ENCODE measurements at regions of chr2 and their contacts with region 1.

Region 1: GRCh38 chr2:148509288-148509902 is 135.2 kb upstream of the EPC2 start:
- DNase-seq: peak; percentile 84
- ATAC-seq: peak; percentile 100
- H3K4me3 ChIP-seq: peak overlapping the region in 4 of 5 experiments; percentile 28 to 58 (median 52)
- H3K4me3 Mint-ChIP-seq: peak overlapping the region; percentile 65
- H3K27ac ChIP-seq: no peak overlapping the region
- H3K27ac Mint-ChIP-seq: peak overlapping the region; percentile 21
- H3K4me1 ChIP-seq: peaks cover 4 to 9% of the 10 kb centered on the region in 2 donors
- H3K4me1 Mint-ChIP-seq: peaks cover 9% of the 10 kb centered on the region
- H3K27me3 ChIP-seq: no peaks in the 10 kb centered on the region
- H3K27me3 Mint-ChIP-seq: no peaks in the 10 kb centered on the region
- CTCF ChIP-seq: peak; percentile 86

Region 2: DNA sequence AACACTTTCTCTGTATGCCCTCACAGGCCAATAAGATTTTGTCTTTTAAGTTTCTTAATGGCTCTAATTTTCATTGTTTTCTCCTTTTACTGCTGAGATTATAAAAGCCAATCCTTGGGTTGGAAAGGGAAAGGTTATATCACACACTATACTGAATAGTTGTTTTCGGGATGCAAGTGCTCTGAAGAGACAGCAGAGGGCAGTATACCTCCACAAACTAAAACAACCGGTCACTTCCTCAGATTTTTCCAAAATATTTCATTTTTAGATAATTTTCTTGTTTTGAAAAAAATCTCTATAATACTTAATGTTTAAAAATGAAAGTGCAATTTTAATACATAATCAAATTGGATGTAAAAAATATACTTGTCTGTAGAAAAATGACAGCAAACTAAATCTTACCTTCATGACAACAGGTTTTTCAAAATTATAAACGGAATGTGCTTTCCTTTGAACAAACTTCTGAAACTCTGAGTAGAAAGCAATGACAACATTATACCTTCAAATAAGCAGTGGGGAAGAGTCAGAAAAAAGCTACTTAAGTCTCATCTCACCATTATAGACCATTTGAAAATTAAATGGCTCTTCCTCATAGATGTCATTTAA is 571.5 kb before region 1 on chr2:
- CTCF ChIA-PET with region 1: interaction called, 70 read pairs
- POLR2A ChIA-PET with region 1: no interaction called
- intact Hi-C with region 1: loop called (anchors 1 kb)
- DNase-seq: peak; percentile 49
- ATAC-seq: no peak
- H3K4me3 ChIP-seq: no peak overlapping the region
- H3K4me3 Mint-ChIP-seq: no peak overlapping the region
- H3K27ac ChIP-seq: no peak overlapping the region
- H3K27ac Mint-ChIP-seq: no peak overlapping the region
- H3K4me1 ChIP-seq: no peaks in the 10 kb centered on the region
- H3K4me1 Mint-ChIP-seq: no peaks in the 10 kb centered on the region
- H3K27me3 ChIP-seq: no peaks in the 10 kb centered on the region
- H3K27me3 Mint-ChIP-seq: no peaks in the 10 kb centered on the region
- CTCF ChIP-seq: peak; percentile 98

Region 3: GRCh38 chr2:147989809-147990403 is 519.5 kb before region 1 on chr2:
- CTCF ChIA-PET with region 1: interaction called, 143 read pairs
- POLR2A ChIA-PET with region 1: interaction called, 3 read pairs
- intact Hi-C with region 1: loop called (anchors 1 kb)
- DNase-seq: peak; percentile 67
- ATAC-seq: peak; percentile 68
- H3K4me3 ChIP-seq: no peak overlapping the region
- H3K4me3 Mint-ChIP-seq: no peak overlapping the region
- H3K27ac ChIP-seq: no peak overlapping the region
- H3K27ac Mint-ChIP-seq: no peak overlapping the region
- H3K4me1 ChIP-seq: no peaks in the 10 kb centered on the region
- H3K4me1 Mint-ChIP-seq: peaks cover 27% of the 10 kb centered on the region
- H3K27me3 ChIP-seq: no peaks in the 10 kb centered on the region
- H3K27me3 Mint-ChIP-seq: no peaks in the 10 kb centered on the region
- CTCF ChIP-seq: peak; percentile 96

Region 4: DNA sequence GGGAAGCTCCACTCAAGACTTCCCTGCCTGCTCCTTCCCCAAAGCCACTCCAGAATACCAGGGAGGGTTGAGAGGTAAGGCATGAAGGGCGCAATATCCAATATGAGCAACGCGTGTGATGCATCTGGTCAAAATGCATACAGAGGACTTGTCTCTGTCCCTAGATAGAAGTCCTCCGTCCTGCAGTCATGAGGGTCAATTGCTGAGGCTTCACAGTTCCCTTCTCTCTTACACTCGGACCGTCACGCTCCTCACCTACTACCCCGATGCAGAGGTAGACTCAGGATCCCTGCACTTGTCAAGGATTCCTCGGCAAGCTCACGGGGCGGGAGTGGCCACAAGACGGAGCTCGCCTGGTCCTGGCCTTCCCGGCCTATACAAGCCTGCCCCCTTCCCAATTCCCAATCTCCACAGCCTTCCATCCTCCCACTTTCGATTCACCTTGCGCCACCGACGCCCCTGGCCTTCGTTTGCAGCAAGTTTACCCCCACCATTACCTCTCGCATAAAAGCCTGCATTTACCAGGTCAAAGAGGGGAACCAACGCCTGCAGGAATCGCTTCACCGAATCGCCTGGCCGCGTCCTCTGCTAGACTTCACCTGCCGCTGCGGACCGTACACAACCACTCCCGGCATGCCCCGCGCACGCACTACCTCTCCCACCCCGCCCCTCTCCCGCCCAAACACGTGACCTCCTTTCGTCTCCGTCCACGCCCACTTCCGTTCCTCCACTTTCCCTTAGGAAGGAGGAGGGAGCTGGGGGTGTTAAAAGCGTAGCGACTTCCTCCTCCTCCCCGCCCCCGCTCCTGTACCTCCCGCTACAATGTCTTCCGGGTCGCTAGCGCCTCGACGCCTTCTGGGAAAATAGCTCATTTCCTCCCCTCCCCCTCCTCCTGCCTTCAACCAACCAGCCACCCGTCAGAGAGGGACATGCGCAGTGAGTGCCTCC is 489.0 kb before region 1 on chr2 and contains the start of gene ORC4:
- CTCF ChIA-PET with region 1: interaction called, 12 read pairs
- POLR2A ChIA-PET with region 1: no interaction called
- intact Hi-C with region 1: no loop called
- DNase-seq: peak; percentile 99
- ATAC-seq: peak; percentile 89
- H3K4me3 ChIP-seq: peak within 1 kb of the TSS; percentile 79 to 95 (median 80)
- H3K4me3 Mint-ChIP-seq: peak within 1 kb of the TSS; percentile 99
- H3K27ac ChIP-seq: peak within 1 kb of the TSS; percentile 91 to 92
- H3K27ac Mint-ChIP-seq: peak within 1 kb of the TSS; percentile 94
- H3K4me1 ChIP-seq: peaks cover 23 to 37% of the 10 kb centered on the region in 2 donors
- H3K4me1 Mint-ChIP-seq: peaks cover 52% of the 10 kb centered on the region
- H3K27me3 ChIP-seq: no peaks in the 10 kb centered on the region
- H3K27me3 Mint-ChIP-seq: no peaks in the 10 kb centered on the region
- CTCF ChIP-seq: no peak
- total RNA-seq, gene ORC4: 44.3 and 48.9 TPM in 2 replicates

Region 5: DNA sequence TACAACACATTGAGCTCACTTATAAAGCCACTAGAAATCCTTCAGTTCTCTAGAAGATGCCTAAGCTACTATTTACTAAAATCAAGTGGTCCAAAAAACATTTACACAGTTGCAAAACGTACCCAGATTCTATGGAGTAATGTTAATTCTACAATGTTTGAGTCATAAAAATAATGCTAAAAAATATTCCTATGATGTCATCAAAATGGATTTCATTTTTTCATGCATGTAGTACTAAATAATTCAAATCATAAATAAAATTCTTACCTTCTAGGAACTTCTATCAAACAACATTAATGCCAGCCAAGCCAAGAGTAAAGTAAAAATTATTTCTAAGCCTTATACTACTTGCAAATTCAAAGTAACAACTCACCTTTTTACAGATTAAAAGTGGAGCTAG is 33.8 kb before region 1 on chr2:
- CTCF ChIA-PET with region 1: no interaction called
- POLR2A ChIA-PET with region 1: no interaction called
- intact Hi-C with region 1: no loop called
- DNase-seq: no peak
- ATAC-seq: no peak
- H3K4me3 ChIP-seq: no peak overlapping the region
- H3K4me3 Mint-ChIP-seq: no peak overlapping the region
- H3K27ac ChIP-seq: no peak overlapping the region
- H3K27ac Mint-ChIP-seq: no peak overlapping the region
- H3K4me1 ChIP-seq: no peaks in the 10 kb centered on the region
- H3K4me1 Mint-ChIP-seq: no peaks in the 10 kb centered on the region
- H3K27me3 ChIP-seq: no peaks in the 10 kb centered on the region
- H3K27me3 Mint-ChIP-seq: no peaks in the 10 kb centered on the region
- CTCF ChIP-seq: no peak

Region 6: GRCh38 chr2:148493822-148494563 is 15.4 kb before region 1 on chr2:
- CTCF ChIA-PET with region 1: interaction called, 20 read pairs
- POLR2A ChIA-PET with region 1: interaction called, 3 read pairs
- intact Hi-C with region 1: no loop called
- DNase-seq: peak; percentile 33
- ATAC-seq: no peak
- H3K4me3 ChIP-seq: peak overlapping the region in 2 of 5 experiments; percentile 18 to 27
- H3K4me3 Mint-ChIP-seq: peak overlapping the region; percentile 80
- H3K27ac ChIP-seq: peak overlapping the region; percentile 64 to 69
- H3K27ac Mint-ChIP-seq: peak overlapping the region; percentile 89
- H3K4me1 ChIP-seq: peaks cover 29 to 40% of the 10 kb centered on the region in 2 donors
- H3K4me1 Mint-ChIP-seq: peaks cover 40% of the 10 kb centered on the region
- H3K27me3 ChIP-seq: no peaks in the 10 kb centered on the region
- H3K27me3 Mint-ChIP-seq: no peaks in the 10 kb centered on the region
- CTCF ChIP-seq: no peak

Region 7: DNA sequence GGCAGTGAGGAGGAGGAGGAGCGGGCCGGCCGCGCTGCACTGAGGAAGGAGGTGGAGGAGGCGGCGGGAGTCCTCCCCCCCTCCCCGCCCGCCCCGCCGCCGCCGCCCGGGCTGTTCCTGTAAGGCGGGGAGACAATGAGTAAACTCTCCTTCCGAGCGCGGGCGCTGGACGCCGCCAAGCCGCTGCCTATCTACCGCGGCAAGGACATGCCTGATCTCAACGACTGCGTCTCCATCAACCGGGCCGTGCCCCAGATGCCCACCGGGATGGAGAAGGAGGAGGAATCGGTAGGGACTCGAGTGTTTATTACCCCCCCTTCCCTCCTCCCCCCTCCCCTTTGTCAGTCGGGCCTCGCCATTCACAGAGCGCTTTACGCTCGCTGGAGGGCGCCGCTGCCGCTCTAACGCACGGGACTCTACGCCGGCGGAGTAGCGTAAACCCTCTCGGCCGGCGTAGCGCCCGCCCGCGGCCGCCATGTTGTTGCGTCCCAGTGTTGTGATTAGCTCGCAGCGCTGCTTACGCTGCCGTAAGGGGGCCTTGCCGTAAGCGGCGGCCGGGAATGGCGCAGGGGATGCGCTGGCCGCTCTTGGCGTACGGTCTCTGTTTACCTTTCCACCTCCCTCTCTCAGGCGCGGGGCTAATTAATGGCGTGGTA is 135.6 kb after region 1 on chr2:
- CTCF ChIA-PET with region 1: no interaction called
- POLR2A ChIA-PET with region 1: no interaction called
- intact Hi-C with region 1: loop called (anchors 10 kb)
- DNase-seq: peak; percentile 99
- ATAC-seq: peak; percentile 78
- H3K4me3 ChIP-seq: peak overlapping the region; percentile 84 to 96 (median 93)
- H3K4me3 Mint-ChIP-seq: peak overlapping the region; percentile 97
- H3K27ac ChIP-seq: peak overlapping the region; percentile 92 to 94
- H3K27ac Mint-ChIP-seq: peak overlapping the region; percentile 98
- H3K4me1 ChIP-seq: peaks cover 19 to 25% of the 10 kb centered on the region in 2 donors
- H3K4me1 Mint-ChIP-seq: peaks cover 40% of the 10 kb centered on the region
- H3K27me3 ChIP-seq: no peaks in the 10 kb centered on the region
- H3K27me3 Mint-ChIP-seq: no peaks in the 10 kb centered on the region
- CTCF ChIP-seq: peak; percentile 22

Region 8: DNA sequence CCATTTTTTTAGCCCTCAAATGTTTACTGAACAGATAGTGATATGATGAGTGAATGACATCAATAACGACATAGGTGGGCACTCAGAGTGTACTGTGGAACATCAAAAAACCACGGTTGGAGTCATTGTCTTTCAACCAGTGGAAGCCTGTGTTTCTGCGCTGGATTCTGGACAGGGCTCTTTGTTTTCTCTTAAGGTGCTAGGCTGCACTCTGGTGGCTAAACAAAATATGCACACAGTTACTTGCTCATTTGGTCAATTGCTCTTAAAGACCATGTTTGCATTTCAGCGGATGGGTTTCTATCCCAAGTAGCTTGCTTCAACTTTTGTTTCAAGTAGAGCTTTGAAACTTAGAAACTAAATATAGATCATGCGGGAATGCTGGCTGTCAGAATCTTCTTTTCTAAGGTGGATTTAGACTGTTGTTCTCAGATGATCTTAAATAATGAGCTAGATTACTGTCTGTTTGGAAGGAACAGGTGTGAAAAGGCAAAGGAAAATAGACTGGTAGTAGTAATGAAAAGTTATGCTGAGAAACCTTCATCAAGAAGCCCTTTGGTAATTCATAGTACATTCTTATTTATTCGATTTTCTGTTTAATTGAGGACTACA is 480.6 kb after region 1 on chr2:
- CTCF ChIA-PET with region 1: interaction called, 12 read pairs
- POLR2A ChIA-PET with region 1: no interaction called
- intact Hi-C with region 1: loop called (anchors 5 kb)
- DNase-seq: peak; percentile 73
- ATAC-seq: peak; percentile 68
- H3K4me3 ChIP-seq: no peak overlapping the region
- H3K4me3 Mint-ChIP-seq: no peak overlapping the region
- H3K27ac ChIP-seq: no peak overlapping the region
- H3K27ac Mint-ChIP-seq: no peak overlapping the region
- H3K4me1 ChIP-seq: no peaks in the 10 kb centered on the region
- H3K4me1 Mint-ChIP-seq: peaks cover 8% of the 10 kb centered on the region
- H3K27me3 ChIP-seq: no peaks in the 10 kb centered on the region
- H3K27me3 Mint-ChIP-seq: no peaks in the 10 kb centered on the region
- CTCF ChIP-seq: peak; percentile 75